ENCODE measurements at regions of chr11 and their contacts with region 1.

Region 1: DNA sequence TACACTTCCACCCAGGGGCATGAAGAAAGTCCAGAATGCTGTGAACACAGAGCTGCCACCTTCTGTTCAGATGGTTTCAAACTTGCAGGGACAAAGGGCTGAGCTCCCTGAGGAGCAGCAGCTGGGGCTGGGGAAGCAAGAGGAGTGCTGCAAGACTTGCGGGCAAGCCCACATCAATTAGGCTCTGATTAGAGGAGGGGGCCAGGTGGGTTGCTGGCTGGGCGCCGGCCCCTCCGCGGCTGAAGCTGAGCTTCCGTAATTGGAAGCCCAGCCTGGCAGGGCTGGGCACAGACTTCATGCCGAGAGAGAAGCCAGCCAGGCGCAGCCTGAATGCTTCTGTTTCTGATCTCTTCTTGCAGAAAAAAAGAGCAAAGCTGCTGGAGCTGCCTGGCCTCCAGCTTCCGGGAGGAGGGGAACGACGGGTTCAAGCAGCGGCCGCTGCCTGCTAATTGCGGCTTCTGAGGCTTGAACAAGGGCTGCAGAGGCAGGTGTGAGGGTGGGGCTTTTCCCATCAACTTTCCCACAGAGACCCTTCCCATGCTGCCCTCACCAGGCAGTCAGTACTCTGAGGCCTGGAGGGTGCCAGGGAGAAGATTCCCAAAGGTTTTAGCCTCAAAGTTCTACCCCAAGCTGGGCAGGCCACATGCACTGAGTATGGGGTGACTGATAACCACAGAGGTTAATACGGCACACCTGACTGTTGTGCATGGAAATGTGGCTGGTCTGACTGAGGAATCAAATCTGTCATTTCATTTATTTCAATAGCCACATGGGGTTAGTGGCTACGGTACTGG is 91.1 kb upstream of the LMO1 start:
- DNase-seq: peak; percentile 79
- H3K4me3 ChIP-seq: peak overlapping the region in 1 of 2 experiments; percentile 24; a peak in 3 of 4 replicates
- H3K27ac ChIP-seq: peak overlapping the region in 1 of 2 experiments; percentile 91; a peak in 2 of 4 replicates
- H3K4me1 ChIP-seq: peaks cover 0 to 48% of the 10 kb centered on the region in 2 experiments; a peak in 1 of 4 replicates
- H3K27me3 ChIP-seq: no peaks in the 10 kb centered on the region; the same call in 1 of the 2 replicates
- CTCF ChIP-seq: no peak
- EP300 ChIP-seq: no peak
- RAD21 ChIP-seq: peak; percentile 44; the same call in 1 of the 2 replicates

Region 2: GRCh38 chr11:8219257-8220021 is 135.4 kb before region 1 on chr11:
- CTCF ChIA-PET with region 1: interaction called, 13 read pairs
- POLR2A ChIA-PET with region 1: no interaction called
- DNase-seq: peak; percentile 80
- H3K4me3 ChIP-seq: no peak overlapping the region
- H3K27ac ChIP-seq: no peak overlapping the region; a peak in 1 of 4 replicates
- H3K4me1 ChIP-seq: peaks cover 0 to 28% of the 10 kb centered on the region in 2 experiments; a peak in 1 of 4 replicates
- H3K27me3 ChIP-seq: no peaks in the 10 kb centered on the region; the same call in 1 of the 2 replicates
- CTCF ChIP-seq: peak; percentile 75
- EP300 ChIP-seq: no peak
- RAD21 ChIP-seq: peak; percentile 69

Region 3: GRCh38 chr11:8338138-8338537 is 16.7 kb before region 1 on chr11:
- CTCF ChIA-PET with region 1: interaction called, 21 read pairs
- POLR2A ChIA-PET with region 1: no interaction called
- DNase-seq: peak; percentile 94
- H3K4me3 ChIP-seq: no peak overlapping the region; a peak in 1 of 4 replicates
- H3K27ac ChIP-seq: peak overlapping the region in 1 of 2 experiments; percentile 72; a peak in 2 of 4 replicates
- H3K4me1 ChIP-seq: peaks cover 0 to 40% of the 10 kb centered on the region in 2 experiments; a peak in 1 of 4 replicates
- H3K27me3 ChIP-seq: no peaks in the 10 kb centered on the region
- CTCF ChIP-seq: peak; percentile 78
- EP300 ChIP-seq: peak in 1 of 2 experiments; percentile 66; a peak in 1 of 4 replicates
- RAD21 ChIP-seq: peak; percentile 72

Measured in SK-N-SH (cell line).